ENCODE measurements at regions of chr1 and their contacts with region 1.

Region 1: GRCh38 chr1:25487628-25488027 is 55.8 kb upstream of the LDLRAP1 start:
- DNase-seq: no peak
- ATAC-seq: peak; percentile 74
- H3K4me3 ChIP-seq: no peak overlapping the region
- H3K27ac ChIP-seq: no peak overlapping the region
- H3K4me1 ChIP-seq: no peaks in the 10 kb centered on the region
- H3K27me3 ChIP-seq: no peaks in the 10 kb centered on the region
- CTCF ChIP-seq: peak; percentile 37 to 63 (median 49); a peak in 5 of 6 replicates
- EP300 ChIP-seq: no peak
- POLR2A ChIP-seq: no peak
- RAD21 ChIP-seq: peak; percentile 31; the same call in 1 of the 2 replicates

Region 2: DNA sequence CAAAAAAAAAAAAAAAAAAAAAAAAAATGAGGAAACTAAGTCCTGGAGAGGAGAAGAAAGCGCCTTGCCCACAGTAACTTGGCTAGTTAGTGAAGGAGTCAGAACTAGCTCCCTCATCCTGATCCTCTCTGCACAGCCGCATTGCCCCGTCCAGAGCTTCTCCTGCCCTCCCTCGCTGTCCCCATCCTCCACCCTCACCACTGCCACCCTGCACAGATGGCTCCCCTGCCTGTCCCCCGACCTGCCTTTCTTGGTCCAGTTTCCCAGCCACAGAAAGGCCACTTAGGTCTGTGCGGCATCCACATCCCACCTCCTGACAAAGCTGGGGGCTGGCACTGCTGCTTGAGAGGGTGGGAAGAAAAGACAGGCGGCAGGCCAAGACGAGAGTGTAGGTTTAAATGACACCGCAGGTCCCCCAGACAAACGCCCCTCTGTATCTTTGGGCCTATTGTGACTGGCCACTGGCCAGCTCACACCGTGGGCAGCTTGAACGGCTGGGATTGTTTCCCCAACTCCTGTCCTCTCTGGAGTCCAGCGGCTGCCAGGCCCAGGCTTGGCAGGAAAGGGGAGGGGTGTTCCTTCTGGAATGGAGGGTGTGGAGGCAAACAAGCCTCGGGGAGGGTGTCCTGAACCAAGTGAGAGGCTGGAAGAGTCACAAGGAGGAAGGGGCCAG is 911.6 kb before region 1 on chr1:
- CTCF ChIA-PET with region 1: no interaction called
- POLR2A ChIA-PET with region 1: no interaction called
- RAD21 ChIA-PET with region 1: no interaction called
- SMC1A ChIA-PET with region 1: no interaction called
- in situ Hi-C with region 1: no loop called
- intact Hi-C with region 1: no loop called
- DNase-seq: no peak
- ATAC-seq: no peak
- H3K4me3 ChIP-seq: no peak overlapping the region
- H3K27ac ChIP-seq: no peak overlapping the region
- H3K4me1 ChIP-seq: peaks cover 4% of the 10 kb centered on the region; the same call in 1 of the 2 replicates
- H3K27me3 ChIP-seq: no peaks in the 10 kb centered on the region; a peak in 1 of 4 replicates
- CTCF ChIP-seq: no peak
- EP300 ChIP-seq: no peak
- POLR2A ChIP-seq: no peak
- RAD21 ChIP-seq: no peak

Region 3: GRCh38 chr1:25198663-25199252 is 288.9 kb before region 1 on chr1:
- CTCF ChIA-PET with region 1: no interaction called
- POLR2A ChIA-PET with region 1: no interaction called
- RAD21 ChIA-PET with region 1: no interaction called
- SMC1A ChIA-PET with region 1: no interaction called
- in situ Hi-C with region 1: no loop called
- intact Hi-C with region 1: no loop called
- DNase-seq: no peak
- ATAC-seq: peak; percentile 90
- H3K4me3 ChIP-seq: no peak overlapping the region
- H3K27ac ChIP-seq: no peak overlapping the region
- H3K4me1 ChIP-seq: peaks cover 4% of the 10 kb centered on the region; the same call in 1 of the 2 replicates
- H3K27me3 ChIP-seq: peaks cover 3 to 4% of the 10 kb centered on the region in 2 experiments
- CTCF ChIP-seq: peak in 2 of 3 experiments; percentile 2 to 25; a peak in 3 of 6 replicates
- EP300 ChIP-seq: no peak
- POLR2A ChIP-seq: no peak
- RAD21 ChIP-seq: no peak

Region 4: DNA sequence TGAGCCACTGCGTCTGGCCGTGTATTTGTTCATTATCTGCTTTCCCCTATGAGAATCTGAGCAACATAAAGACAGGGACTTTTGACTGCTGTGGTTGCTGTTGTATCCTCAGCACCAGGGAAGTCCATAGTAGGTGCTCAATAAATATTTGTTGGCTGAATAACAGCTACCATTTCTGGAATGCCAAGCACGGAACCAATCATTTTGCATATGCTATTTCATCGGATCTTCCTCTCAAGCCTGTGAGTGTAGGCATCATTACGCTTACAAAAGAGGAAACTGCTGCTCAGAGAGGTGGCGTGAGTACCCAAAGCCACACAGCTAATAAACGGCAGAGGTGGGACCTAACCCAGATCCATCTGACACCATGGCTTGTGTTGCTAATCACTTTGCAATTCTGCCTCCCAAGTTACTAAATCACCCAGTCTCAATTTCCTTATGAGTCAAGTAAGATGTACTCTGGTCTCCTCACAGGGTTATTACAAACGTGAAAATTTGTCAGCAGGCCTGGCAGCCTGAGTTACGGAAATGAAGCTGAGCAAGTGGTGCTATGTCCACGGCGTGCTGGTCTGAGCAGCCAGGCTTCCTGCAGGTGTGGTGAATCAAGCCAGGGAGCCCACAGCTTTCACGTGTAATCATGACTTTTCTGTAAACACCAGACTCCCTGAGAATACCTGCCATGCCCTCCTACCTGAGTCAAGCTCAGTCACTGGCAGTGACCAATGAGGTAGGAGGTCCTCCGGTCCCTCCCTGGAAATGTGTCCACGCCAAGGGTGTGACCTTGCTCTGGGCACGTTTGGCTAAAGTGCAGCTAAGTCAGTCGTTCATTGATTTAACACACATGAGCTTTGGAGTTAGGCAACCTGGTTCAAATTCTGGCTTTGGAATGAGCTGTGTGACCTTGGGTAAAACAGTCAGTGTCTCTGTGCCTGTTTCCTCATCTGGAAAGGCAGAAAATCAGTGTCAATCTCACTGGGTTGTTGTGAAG is 62.2 kb before region 1 on chr1:
- CTCF ChIA-PET with region 1: interaction called, 16 read pairs
- POLR2A ChIA-PET with region 1: no interaction called
- RAD21 ChIA-PET with region 1: interaction called, 5 read pairs
- SMC1A ChIA-PET with region 1: interaction called, 69 read pairs
- in situ Hi-C with region 1: no loop called
- intact Hi-C with region 1: no loop called
- DNase-seq: no peak
- ATAC-seq: no peak
- H3K4me3 ChIP-seq: no peak overlapping the region
- H3K27ac ChIP-seq: no peak overlapping the region
- H3K4me1 ChIP-seq: no peaks in the 10 kb centered on the region
- H3K27me3 ChIP-seq: no peaks in the 10 kb centered on the region
- CTCF ChIP-seq: no peak
- EP300 ChIP-seq: no peak
- POLR2A ChIP-seq: no peak
- RAD21 ChIP-seq: no peak

Region 5: DNA sequence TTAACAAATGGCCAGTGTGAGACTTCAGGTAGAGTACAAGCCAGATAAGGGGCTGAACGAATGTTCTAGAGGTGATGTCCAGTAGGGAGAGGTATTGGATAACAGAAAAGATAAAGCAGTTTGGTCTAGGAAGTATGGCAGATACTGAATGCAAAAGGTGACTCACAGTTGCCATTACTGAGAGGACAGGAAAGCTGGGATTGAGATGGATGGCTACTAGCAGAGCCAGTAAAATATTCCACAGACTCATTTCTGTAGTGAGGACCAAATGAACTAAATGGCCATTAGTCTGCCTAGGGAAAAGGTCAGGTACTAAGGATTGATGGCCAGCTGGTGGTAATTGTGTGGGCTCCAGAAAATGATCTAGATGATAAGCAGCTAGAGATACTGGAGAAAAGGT is 45.5 kb before region 1 on chr1:
- CTCF ChIA-PET with region 1: interaction called, 36 read pairs
- POLR2A ChIA-PET with region 1: no interaction called
- RAD21 ChIA-PET with region 1: interaction called, 3 read pairs
- SMC1A ChIA-PET with region 1: interaction called, 69 read pairs
- in situ Hi-C with region 1: no loop called
- intact Hi-C with region 1: no loop called
- DNase-seq: no peak
- ATAC-seq: no peak
- H3K4me3 ChIP-seq: no peak overlapping the region
- H3K27ac ChIP-seq: no peak overlapping the region
- H3K4me1 ChIP-seq: peaks cover 11% of the 10 kb centered on the region; the same call in 1 of the 2 replicates
- H3K27me3 ChIP-seq: no peaks in the 10 kb centered on the region
- CTCF ChIP-seq: no peak; a peak in 1 of 6 replicates
- EP300 ChIP-seq: no peak
- POLR2A ChIP-seq: no peak
- RAD21 ChIP-seq: no peak

Region 6: GRCh38 chr1:25456502-25456901 is 31.1 kb before region 1 on chr1:
- CTCF ChIA-PET with region 1: interaction called, 49 read pairs
- POLR2A ChIA-PET with region 1: interaction called, 3 read pairs
- RAD21 ChIA-PET with region 1: no interaction called
- SMC1A ChIA-PET with region 1: interaction called, 3 read pairs
- in situ Hi-C with region 1: no loop called
- intact Hi-C with region 1: no loop called
- DNase-seq: no peak
- ATAC-seq: no peak
- H3K4me3 ChIP-seq: no peak overlapping the region
- H3K27ac ChIP-seq: no peak overlapping the region
- H3K4me1 ChIP-seq: peaks cover 5% of the 10 kb centered on the region
- H3K27me3 ChIP-seq: no peaks in the 10 kb centered on the region
- CTCF ChIP-seq: no peak
- EP300 ChIP-seq: no peak
- POLR2A ChIP-seq: no peak
- RAD21 ChIP-seq: no peak

Region 7: GRCh38 chr1:25476186-25477097 is 11.2 kb before region 1 on chr1:
- CTCF ChIA-PET with region 1: interaction called, 79 read pairs
- POLR2A ChIA-PET with region 1: interaction called, 6 read pairs
- RAD21 ChIA-PET with region 1: interaction called, 14 read pairs
- SMC1A ChIA-PET with region 1: interaction called, 52 read pairs
- in situ Hi-C with region 1: no loop called
- intact Hi-C with region 1: no loop called
- DNase-seq: peak; percentile 26
- ATAC-seq: peak; percentile 55
- H3K4me3 ChIP-seq: no peak overlapping the region
- H3K27ac ChIP-seq: peak overlapping the region; percentile 13; the same call in 1 of the 2 replicates
- H3K4me1 ChIP-seq: peaks cover 13% of the 10 kb centered on the region
- H3K27me3 ChIP-seq: no peaks in the 10 kb centered on the region
- CTCF ChIP-seq: no peak
- EP300 ChIP-seq: peak in 1 of 2 experiments; percentile 68; a peak in 2 of 4 replicates
- POLR2A ChIP-seq: no peak
- RAD21 ChIP-seq: no peak

Region 8: DNA sequence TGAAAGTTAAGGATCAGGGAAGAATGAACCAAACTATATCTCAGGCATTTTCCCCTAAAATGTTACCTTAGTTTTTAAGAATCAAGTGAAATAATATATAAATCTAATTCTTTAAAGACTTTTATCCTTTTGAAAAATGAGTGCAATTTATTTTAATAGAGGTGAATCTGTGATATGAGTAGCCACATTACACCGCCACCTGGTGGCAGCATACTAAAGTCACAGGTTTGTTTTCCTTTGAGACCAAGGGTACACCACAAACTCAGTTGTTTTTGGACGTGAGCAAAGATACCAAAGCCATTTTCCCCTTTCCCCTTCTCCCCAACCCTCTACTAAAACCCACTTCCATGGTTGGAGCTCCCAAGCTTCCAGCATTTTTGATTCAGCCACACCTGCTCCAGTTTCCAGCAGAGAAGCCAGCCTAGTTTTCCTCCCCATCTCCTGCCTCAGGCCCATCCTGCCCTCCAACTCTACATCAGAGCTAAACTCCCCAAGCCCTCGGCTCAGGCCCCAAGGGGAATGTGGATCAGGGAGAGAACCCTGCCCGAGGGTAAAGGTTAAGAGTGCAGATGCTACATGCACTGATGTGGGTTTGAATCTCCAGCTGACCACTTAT is 32.9 kb after region 1 on chr1:
- CTCF ChIA-PET with region 1: interaction called, 19 read pairs
- POLR2A ChIA-PET with region 1: no interaction called
- RAD21 ChIA-PET with region 1: interaction called, 3 read pairs
- SMC1A ChIA-PET with region 1: interaction called, 9 read pairs
- in situ Hi-C with region 1: no loop called
- intact Hi-C with region 1: no loop called
- DNase-seq: peak; percentile 17
- ATAC-seq: peak; percentile 75
- H3K4me3 ChIP-seq: no peak overlapping the region
- H3K27ac ChIP-seq: no peak overlapping the region
- H3K4me1 ChIP-seq: no peaks in the 10 kb centered on the region
- H3K27me3 ChIP-seq: no peaks in the 10 kb centered on the region
- CTCF ChIP-seq: peak; percentile 66 to 77 (median 75); a peak in 5 of 6 replicates
- EP300 ChIP-seq: no peak
- POLR2A ChIP-seq: no peak
- RAD21 ChIP-seq: peak; percentile 72

Region 9: GRCh38 chr1:25562101-25562927 is 74.7 kb after region 1 on chr1:
- CTCF ChIA-PET with region 1: no interaction called
- POLR2A ChIA-PET with region 1: no interaction called
- RAD21 ChIA-PET with region 1: no interaction called
- SMC1A ChIA-PET with region 1: no interaction called
- in situ Hi-C with region 1: no loop called
- intact Hi-C with region 1: no loop called
- DNase-seq: peak; percentile 48
- ATAC-seq: peak; percentile 99
- H3K4me3 ChIP-seq: no peak overlapping the region
- H3K27ac ChIP-seq: peak overlapping the region; percentile 65
- H3K4me1 ChIP-seq: peaks cover 18% of the 10 kb centered on the region
- H3K27me3 ChIP-seq: no peaks in the 10 kb centered on the region
- CTCF ChIP-seq: no peak
- EP300 ChIP-seq: 0 out of 4 replicates have a peak, but pooled peaks of 1 of the 2 experiments have one; percentile 12
- POLR2A ChIP-seq: no peak; the same call in 1 of the 2 replicates
- RAD21 ChIP-seq: no peak